Activated T-helper 2 cell treated with anti-CD3 and anti-CD28 coated beads, Interferon-gamma antibody, Interleukin-2, Interleukin-4, amounts not matched to agents 10 μg/mL and 5 μg/mL and 100 μg/mL, durations not matched to agents 14 hours and 24 hours and 36 hours (primary cell): ENCODE measurements at regions of chr12 and their contacts with region 1.

Region 1: GRCh38 chr12:1226951-1227350 is 235.9 kb downstream of the ERC1 start:
- DNase-seq: no peak
- H3K4me3 Mint-ChIP-seq: no peak overlapping the region
- H3K27ac Mint-ChIP-seq: no peak overlapping the region
- H3K4me1 Mint-ChIP-seq: peaks cover 20% of the 10 kb centered on the region
- H3K27me3 Mint-ChIP-seq: peaks cover 2% of the 10 kb centered on the region

Region 2: DNA sequence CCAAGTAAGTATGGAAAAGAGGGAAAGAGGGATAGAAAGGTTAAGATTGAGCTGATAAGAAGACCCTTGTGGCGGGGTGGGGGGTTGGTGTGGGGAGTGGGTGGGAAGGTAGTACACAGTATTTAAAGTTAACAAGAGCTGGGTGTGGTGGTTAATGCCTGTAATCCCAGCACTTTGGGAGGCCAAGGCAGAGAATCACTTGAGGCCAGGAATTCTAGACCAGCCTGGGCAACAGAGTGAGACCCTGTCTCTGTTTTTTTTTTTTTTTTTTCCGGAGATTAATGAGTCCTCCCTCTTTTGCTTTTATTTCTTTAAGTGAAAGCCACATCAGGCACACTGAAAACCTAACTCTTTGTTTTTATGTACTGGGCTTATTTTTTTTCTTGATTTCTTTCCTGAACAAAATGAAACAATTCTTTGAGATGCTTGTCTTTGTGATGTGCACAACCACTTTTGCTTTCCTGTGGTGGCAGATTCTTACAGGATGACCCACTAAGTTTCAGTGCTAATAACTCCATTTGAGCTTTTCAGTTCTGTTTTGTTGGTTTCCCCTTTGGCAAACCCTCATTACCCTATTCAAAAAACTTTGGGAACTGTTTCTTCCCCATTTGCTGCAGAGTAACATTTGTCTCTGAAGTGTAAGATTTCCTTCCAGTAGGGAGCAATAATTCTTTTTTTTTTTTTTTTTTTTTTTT is 419.8 kb before region 1 on chr12:
- intact Hi-C with region 1: no loop called
- DNase-seq: no peak
- H3K4me3 Mint-ChIP-seq: no peak overlapping the region
- H3K27ac Mint-ChIP-seq: no peak overlapping the region
- H3K4me1 Mint-ChIP-seq: peaks cover 64% of the 10 kb centered on the region
- H3K27me3 Mint-ChIP-seq: no peaks in the 10 kb centered on the region

Region 3: DNA sequence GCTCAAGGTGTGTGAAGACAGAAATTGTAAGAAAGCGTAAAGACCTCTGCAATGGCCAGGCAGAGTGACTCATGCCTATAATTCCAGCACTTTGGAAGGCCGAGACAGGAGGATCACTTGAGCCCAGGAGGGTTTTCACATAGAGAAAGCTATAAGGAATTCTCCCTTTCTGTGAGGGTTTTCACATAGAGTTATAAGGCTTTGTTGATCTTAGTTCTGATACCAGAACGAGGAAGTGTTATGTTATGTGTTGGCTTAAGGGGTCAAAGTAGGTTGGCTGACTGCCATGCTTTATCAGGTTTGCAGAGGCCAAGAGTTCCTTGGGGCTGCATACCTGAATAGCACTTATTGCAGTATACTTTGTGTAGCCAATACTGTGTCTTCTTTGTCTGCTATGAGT is 96.8 kb before region 1 on chr12:
- intact Hi-C with region 1: loop called (anchors 2 kb)
- DNase-seq: no peak
- H3K4me3 Mint-ChIP-seq: no peak overlapping the region
- H3K27ac Mint-ChIP-seq: no peak overlapping the region
- H3K4me1 Mint-ChIP-seq: peaks cover 30% of the 10 kb centered on the region
- H3K27me3 Mint-ChIP-seq: peaks cover 1% of the 10 kb centered on the region

Region 4: GRCh38 chr12:1213205-1213604 is 13.7 kb before region 1 on chr12:
- intact Hi-C with region 1: loop called (anchors 1 kb)
- DNase-seq: no peak
- H3K4me3 Mint-ChIP-seq: no peak overlapping the region
- H3K27ac Mint-ChIP-seq: peak overlapping the region; percentile 69
- H3K4me1 Mint-ChIP-seq: peaks cover 13% of the 10 kb centered on the region
- H3K27me3 Mint-ChIP-seq: no peaks in the 10 kb centered on the region

Region 5: GRCh38 chr12:1328391-1328790 is 101.4 kb after region 1 on chr12:
- intact Hi-C with region 1: loop called (anchors 5 kb)
- DNase-seq: no peak
- H3K4me3 Mint-ChIP-seq: no peak overlapping the region
- H3K27ac Mint-ChIP-seq: no peak overlapping the region
- H3K4me1 Mint-ChIP-seq: peaks cover 7% of the 10 kb centered on the region
- H3K27me3 Mint-ChIP-seq: no peaks in the 10 kb centered on the region

Region 6: DNA sequence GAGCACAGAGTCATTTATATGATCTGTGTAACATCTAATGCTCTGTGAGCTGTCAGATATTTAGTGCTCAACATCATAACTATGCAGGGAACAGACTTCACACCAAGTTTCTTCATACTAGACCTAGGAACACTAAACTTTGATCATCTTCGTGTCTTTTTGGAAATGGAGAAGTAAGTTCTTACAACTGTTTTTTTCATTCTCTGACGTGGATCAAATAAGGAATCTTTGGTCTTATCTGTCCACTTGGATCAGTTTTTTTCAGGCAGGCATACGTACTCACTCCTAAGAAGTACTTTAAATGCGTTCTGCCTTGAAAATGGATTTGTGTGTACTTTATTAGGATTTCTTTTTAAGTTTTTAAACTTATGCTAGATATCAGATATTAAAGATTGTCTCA is 176.5 kb after region 1 on chr12:
- intact Hi-C with region 1: no loop called
- DNase-seq: no peak
- H3K4me3 Mint-ChIP-seq: no peak overlapping the region
- H3K27ac Mint-ChIP-seq: no peak overlapping the region
- H3K4me1 Mint-ChIP-seq: no peaks in the 10 kb centered on the region
- H3K27me3 Mint-ChIP-seq: no peaks in the 10 kb centered on the region

Region 7: DNA sequence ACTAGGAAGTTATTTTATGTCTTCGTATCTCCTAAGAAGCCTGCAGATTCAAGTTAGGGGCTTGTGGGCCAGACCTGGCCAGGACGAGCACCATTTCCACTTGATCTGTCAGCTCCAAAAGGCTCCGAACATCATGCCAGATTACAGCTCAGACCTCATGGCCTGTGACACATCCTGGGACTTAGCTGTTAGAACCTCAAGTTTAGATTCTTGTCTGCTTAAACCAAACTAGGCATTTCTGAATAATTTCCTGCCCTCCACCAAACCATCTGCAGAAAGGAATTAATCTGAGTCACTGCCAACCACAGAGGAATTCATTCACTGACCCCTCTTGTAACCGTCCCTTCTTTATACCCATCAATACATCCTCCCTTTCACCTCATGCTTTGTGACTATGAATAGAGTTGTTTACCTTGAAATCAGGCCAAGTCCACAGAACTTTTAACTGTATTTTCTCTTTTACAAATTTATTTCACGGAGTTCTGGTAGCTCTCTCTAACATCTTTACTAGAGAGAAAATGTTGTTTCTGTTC is 247.2 kb after region 1 on chr12:
- intact Hi-C with region 1: loop called (anchors 5 kb)
- DNase-seq: peak; percentile 21
- H3K4me3 Mint-ChIP-seq: no peak overlapping the region
- H3K27ac Mint-ChIP-seq: no peak overlapping the region
- H3K4me1 Mint-ChIP-seq: peaks cover 10% of the 10 kb centered on the region
- H3K27me3 Mint-ChIP-seq: no peaks in the 10 kb centered on the region